ENCODE measurements at regions of chr11 and their contacts with region 1.

Region 1: DNA sequence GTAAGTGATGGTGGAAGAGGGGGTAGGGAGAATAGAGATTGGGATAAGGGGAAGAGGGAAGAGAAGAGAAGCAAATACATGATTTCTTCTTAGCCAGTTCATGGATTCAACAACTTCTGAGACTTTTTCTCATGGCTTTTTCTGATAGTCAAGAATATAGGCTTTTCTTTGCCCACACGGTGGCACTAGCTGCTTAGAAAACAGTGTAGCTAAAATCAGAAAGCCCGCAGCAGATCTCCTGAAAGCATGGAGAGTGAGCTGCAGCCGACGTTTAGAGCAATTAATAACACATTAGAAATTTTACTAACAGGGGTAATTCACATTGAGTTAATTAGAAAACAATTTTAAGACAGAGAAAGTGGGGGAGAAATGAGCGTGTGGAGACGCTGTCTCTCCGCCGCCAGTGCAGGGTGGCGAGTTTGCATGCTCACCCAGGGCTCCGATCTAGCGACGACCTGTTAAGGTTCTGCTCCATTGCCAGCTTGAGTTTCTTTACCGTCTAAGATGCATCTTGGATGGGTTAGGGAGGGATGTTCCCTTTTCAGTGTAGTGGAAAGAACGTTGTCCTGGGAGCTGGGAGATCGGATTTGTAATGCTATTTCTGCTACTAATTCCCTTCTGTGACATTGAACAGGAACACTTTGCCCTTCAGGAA is 3.3 kb upstream of the RAG1 start:
- DNase-seq: peak; percentile 70
- H3K4me3 ChIP-seq: peak overlapping the region; percentile 48 to 67
- H3K27ac ChIP-seq: peak overlapping the region in 1 of 2 experiments; percentile 100; a peak in 2 of 4 replicates
- H3K4me1 ChIP-seq: peaks cover 0 to 27% of the 10 kb centered on the region in 2 experiments; a peak in 2 of 4 replicates
- H3K27me3 ChIP-seq: no peaks in the 10 kb centered on the region
- CTCF ChIP-seq: peak; percentile 91
- EP300 ChIP-seq: no peak
- RAD21 ChIP-seq: peak; percentile 93

Region 2: DNA sequence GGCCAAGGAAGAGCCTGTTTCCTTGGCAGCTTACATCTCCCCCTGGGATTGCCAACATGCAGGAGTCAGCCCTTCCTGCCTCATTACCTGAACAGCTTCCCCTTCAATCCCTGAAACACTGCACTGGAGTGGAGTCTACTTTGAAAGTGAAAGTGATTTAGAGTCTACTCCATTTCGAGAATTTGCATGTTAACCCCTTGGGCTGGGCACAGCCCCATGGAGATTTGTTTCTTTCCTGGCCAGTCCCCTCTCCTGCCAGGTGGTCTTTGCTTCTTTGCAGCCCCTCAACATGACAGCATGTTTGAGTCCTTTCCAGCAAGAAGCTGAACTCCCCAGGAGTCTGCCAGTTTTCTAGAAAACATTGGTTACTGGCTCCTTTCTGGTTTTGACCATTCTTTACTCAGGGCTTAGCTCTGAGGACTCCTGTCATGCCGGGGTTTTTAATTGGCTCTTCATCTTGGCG is 114.4 kb before region 1 on chr11:
- CTCF ChIA-PET with region 1: no interaction called
- POLR2A ChIA-PET with region 1: no interaction called
- DNase-seq: no peak
- H3K4me3 ChIP-seq: 0 out of 4 replicates have a peak overlapping the region, but pooled peaks of 1 of the 2 experiments have one; percentile 3
- H3K27ac ChIP-seq: no peak overlapping the region
- H3K4me1 ChIP-seq: peaks cover 4 to 22% of the 10 kb centered on the region in 2 experiments
- H3K27me3 ChIP-seq: no peaks in the 10 kb centered on the region
- CTCF ChIP-seq: no peak
- EP300 ChIP-seq: no peak
- RAD21 ChIP-seq: no peak

Region 3: DNA sequence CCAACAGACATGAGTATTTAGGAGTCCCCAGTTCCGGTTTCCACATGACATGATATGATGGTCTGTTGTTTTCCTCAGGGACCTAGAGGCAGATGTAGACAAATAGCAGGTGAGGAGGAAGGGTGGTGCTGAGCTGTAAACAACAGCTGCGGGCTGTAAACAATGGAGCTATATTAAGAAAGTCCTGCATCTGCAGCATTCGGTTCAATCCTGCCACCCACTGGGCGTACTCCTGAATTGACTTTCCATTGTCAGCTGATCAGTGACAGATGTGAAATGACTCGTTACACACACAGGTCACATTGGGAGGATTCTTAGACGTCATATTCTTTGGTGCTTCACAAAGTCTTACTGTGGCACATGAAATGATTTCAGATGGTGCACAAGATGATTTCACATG is 23.5 kb before region 1 on chr11:
- CTCF ChIA-PET with region 1: interaction called, 12 read pairs
- POLR2A ChIA-PET with region 1: no interaction called
- DNase-seq: peak; percentile 37
- H3K4me3 ChIP-seq: no peak overlapping the region
- H3K27ac ChIP-seq: no peak overlapping the region
- H3K4me1 ChIP-seq: peaks cover 0 to 8% of the 10 kb centered on the region in 2 experiments; a peak in 2 of 4 replicates
- H3K27me3 ChIP-seq: no peaks in the 10 kb centered on the region; the same call in none of the 2 replicates
- CTCF ChIP-seq: peak; percentile 43
- EP300 ChIP-seq: no peak
- RAD21 ChIP-seq: peak; percentile 70

Region 4: GRCh38 chr11:36601155-36601554 is 36.7 kb after region 1 on chr11:
- CTCF ChIA-PET with region 1: interaction called, 16 read pairs
- POLR2A ChIA-PET with region 1: no interaction called
- DNase-seq: no peak
- H3K4me3 ChIP-seq: no peak overlapping the region
- H3K27ac ChIP-seq: no peak overlapping the region
- H3K4me1 ChIP-seq: peaks cover 0 to 4% of the 10 kb centered on the region in 2 experiments; a peak in 2 of 4 replicates
- H3K27me3 ChIP-seq: no peaks in the 10 kb centered on the region
- CTCF ChIP-seq: no peak
- EP300 ChIP-seq: no peak
- RAD21 ChIP-seq: no peak

Region 5: GRCh38 chr11:36631774-36632173 is 67.3 kb after region 1 on chr11:
- CTCF ChIA-PET with region 1: interaction called, 49 read pairs
- POLR2A ChIA-PET with region 1: interaction called, 16 read pairs
- DNase-seq: no peak
- H3K4me3 ChIP-seq: no peak overlapping the region
- H3K27ac ChIP-seq: peak overlapping the region in 1 of 2 experiments; percentile 99; a peak in 2 of 4 replicates
- H3K4me1 ChIP-seq: peaks cover 0 to 37% of the 10 kb centered on the region in 2 experiments; a peak in 2 of 4 replicates
- H3K27me3 ChIP-seq: no peaks in the 10 kb centered on the region
- CTCF ChIP-seq: no peak
- EP300 ChIP-seq: no peak
- RAD21 ChIP-seq: no peak

Region 6: DNA sequence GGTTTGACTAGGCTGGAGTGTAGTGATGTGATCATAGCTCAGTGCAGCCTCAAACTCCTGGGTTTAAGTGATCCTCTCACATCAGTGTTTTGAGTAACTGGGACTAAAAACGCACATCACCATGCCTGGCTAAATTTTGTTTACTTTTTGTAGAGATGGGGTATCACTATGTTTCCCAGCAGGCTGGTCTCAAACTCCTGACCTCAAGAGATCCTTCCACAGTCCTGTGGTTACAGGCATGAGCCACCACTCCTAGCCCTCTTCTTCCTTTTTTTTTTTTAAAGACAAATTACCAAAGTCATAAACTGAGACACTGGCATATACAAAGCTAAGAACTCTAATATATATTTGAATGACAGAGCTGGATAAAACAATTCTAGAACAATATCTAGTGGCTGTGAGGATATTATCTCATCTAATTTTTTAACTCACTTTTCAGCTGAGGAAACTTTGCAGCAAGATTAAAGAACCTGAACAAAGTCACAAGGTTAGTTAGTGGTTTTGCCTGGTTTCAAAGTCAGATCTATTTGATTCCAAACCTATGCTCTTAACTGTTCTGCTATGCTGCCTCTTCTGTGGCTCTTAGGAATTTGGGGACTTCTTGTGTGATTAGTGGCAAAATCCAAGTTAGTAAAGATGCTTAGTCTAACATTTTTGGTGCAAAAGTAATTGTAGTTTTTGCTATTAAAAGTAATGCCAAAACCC is 128.8 kb after region 1 on chr11:
- CTCF ChIA-PET with region 1: interaction called, 19 read pairs
- POLR2A ChIA-PET with region 1: no interaction called
- DNase-seq: no peak
- H3K4me3 ChIP-seq: no peak overlapping the region
- H3K27ac ChIP-seq: no peak overlapping the region
- H3K4me1 ChIP-seq: no peaks in the 10 kb centered on the region; a peak in 1 of 4 replicates
- H3K27me3 ChIP-seq: peaks cover 5% of the 10 kb centered on the region
- CTCF ChIP-seq: no peak
- EP300 ChIP-seq: no peak
- RAD21 ChIP-seq: no peak

Region 7: DNA sequence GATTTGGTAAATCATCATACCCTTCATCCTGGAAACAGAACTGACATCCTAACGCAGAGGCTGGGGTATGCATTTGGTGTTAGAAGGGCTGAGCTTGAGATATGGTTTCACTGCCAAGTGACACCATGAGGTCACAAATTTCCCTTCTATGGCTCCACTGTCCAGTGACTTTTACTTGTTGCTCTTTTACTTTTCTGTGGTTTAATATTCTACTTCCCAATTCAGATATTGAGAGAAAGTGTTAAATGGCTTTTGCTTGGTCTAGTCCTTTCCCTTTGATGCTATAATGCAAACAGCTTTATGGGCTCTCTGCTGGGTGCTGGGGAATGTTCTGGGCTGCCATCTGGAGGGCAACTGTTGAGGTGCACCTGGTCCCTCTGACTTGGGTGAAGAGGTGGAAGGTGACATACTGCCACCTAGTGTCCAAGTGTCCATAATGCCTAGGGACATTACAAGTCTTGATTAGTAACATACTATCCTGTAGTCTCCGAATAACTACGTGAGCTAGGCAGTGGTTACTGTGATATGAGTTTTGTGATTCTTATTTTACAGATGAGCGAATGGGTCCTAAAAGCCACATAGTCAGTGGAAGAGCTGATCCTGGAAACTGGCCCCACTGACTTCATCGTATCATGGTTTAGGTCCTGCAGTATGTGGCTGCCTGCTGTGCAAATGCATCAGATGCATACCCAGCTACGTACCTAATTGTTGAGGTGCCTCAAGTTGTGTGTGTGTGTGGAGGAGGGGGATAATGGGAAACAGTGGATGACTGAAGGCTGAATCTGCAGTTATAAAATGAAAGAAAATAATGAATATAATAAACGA is 182.6 kb after region 1 on chr11:
- CTCF ChIA-PET with region 1: interaction called, 199 read pairs
- POLR2A ChIA-PET with region 1: interaction called, 13 read pairs
- DNase-seq: peak; percentile 76
- H3K4me3 ChIP-seq: peak overlapping the region in 1 of 2 experiments; percentile 39; a peak in 1 of 4 replicates
- H3K27ac ChIP-seq: peak overlapping the region in 1 of 2 experiments; percentile 67; a peak in 2 of 4 replicates
- H3K4me1 ChIP-seq: peaks cover 13 to 18% of the 10 kb centered on the region in 2 experiments
- H3K27me3 ChIP-seq: no peaks in the 10 kb centered on the region
- CTCF ChIP-seq: peak; percentile 99
- EP300 ChIP-seq: no peak
- RAD21 ChIP-seq: peak; percentile 97

Measured in SK-N-SH (cell line).